GM10248 (cell line): ENCODE measurements at regions of chr20 and their contacts with region 1.

Region 1: GRCh38 chr20:51404298-51405060 is 138.0 kb downstream of the NFATC2 start:
- DNase-seq: peak; percentile 89
- CTCF ChIP-seq: no peak

Region 2: GRCh38 chr20:51417250-51418136 is 13.0 kb after region 1 on chr20:
- CTCF ChIA-PET with region 1: interaction called, 20 read pairs
- POLR2A ChIA-PET with region 1: no interaction called
- DNase-seq: no peak
- CTCF ChIP-seq: no peak